ENCODE measurements at regions of chr22 and their contacts with region 1.

Region 1: GRCh38 chr22:28009272-28009827 is 90.3 kb upstream of the PITPNB start:
- DNase-seq: peak; percentile 71 to 88 (median 87)
- ATAC-seq: peak; percentile 69 to 79
- H3K4me3 ChIP-seq: no peak overlapping the region
- H3K27ac ChIP-seq: no peak overlapping the region
- H3K4me1 ChIP-seq: no peaks in the 10 kb centered on the region
- H3K27me3 ChIP-seq: no peaks in the 10 kb centered on the region

Region 2: GRCh38 chr22:27880778-27881394 is 128.5 kb before region 1 on chr22:
- intact Hi-C with region 1: loop called (anchors 2 to 5 kb)
- DNase-seq: no peak
- ATAC-seq: peak; percentile 80 to 84
- H3K4me3 ChIP-seq: no peak overlapping the region
- H3K27ac ChIP-seq: peak overlapping the region; percentile 81
- H3K4me1 ChIP-seq: peaks cover 6% of the 10 kb centered on the region
- H3K27me3 ChIP-seq: no peaks in the 10 kb centered on the region

Region 3: DNA sequence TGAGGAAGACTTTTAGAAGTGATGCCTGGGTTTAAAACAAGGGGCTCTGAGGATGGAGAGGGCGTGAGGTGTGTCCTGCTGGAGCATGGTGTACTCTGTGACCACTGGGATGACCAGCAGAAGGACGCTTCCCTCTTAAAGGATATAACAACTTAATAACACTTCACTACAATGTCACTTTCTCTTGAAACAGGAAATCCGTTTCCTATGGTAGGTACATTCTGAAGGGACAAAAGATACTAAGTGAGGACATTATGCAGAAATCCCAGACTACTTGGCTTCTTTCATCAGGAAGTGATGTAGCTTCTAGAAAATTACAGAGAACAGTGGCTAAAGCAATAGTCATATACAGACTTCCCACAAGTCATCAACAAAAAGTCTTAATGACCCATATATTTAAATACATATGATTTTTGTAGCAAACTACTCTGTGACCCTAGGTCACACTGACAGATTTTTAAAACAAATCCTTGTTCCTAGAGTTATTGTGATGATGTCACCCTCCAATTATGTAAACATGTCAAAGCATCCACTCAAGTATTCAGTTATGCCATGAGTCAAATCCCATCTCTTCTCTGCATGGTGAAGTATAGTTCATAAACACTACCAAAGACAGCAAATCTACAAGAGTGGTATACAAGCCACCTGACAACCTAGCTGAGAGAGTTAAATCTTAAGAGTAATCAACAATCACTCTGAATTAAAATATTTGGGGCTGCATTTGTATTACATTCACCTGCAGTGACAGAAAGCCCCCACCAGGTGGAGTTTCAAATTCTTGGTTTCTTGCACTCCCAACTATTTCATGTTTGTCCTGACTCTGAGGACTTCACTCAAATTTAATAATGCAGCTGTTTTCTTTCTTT is 123.1 kb before region 1 on chr22:
- intact Hi-C with region 1: loop called (anchors 2 to 5 kb)
- DNase-seq: no peak
- ATAC-seq: peak in 1 of 2 donors; percentile 55
- H3K4me3 ChIP-seq: no peak overlapping the region
- H3K27ac ChIP-seq: peak overlapping the region; percentile 45
- H3K4me1 ChIP-seq: peaks cover 17% of the 10 kb centered on the region
- H3K27me3 ChIP-seq: no peaks in the 10 kb centered on the region

Region 4: GRCh38 chr22:27919222-27919941 is 90.0 kb before region 1 on chr22 and contains the start of gene PITPNB:
- intact Hi-C with region 1: loop called in 1 of 4 experiments (anchors 10 kb)
- DNase-seq: peak; percentile 99 to 100 (median 99)
- ATAC-seq: peak; percentile 96 to 97
- H3K4me3 ChIP-seq: peak within 1 kb of the TSS; percentile 80
- H3K27ac ChIP-seq: peak within 1 kb of the TSS; percentile 96
- H3K4me1 ChIP-seq: peaks cover 5% of the 10 kb centered on the region
- H3K27me3 ChIP-seq: no peaks in the 10 kb centered on the region
- total RNA-seq, gene PITPNB: 77.3 to 92.7 (median 84.1) TPM

Region 5: DNA sequence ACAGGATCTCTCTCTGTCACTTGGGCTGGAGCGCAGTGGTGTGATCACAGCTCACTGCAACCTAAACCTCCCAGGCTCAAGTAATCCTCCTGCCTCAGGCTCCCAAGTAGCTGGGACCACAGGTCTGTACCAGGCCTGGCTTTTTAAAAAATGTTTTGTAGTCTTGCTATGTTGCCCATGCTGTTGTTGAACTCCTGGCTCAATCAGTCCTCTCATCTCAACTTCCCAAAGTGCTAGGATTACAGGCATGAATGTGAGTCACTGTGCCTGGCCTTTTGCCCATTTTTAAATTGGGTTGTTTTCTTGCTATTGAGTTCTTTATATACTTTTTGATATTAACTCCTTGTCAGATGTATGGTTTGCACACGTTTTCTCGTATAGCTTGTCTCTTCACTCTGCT is 57.3 kb before region 1 on chr22:
- intact Hi-C with region 1: no loop called
- DNase-seq: no peak
- ATAC-seq: no peak
- H3K4me3 ChIP-seq: no peak overlapping the region
- H3K27ac ChIP-seq: no peak overlapping the region
- H3K4me1 ChIP-seq: peaks cover 2% of the 10 kb centered on the region
- H3K27me3 ChIP-seq: no peaks in the 10 kb centered on the region

Measured in right cardiac atrium (tissue), 5 donors.